H1 (cell line): ENCODE measurements at regions of chr11 and their contacts with region 1.

Region 1: GRCh38 chr11:68191661-68192579 is 21.2 kb downstream of the KMT5B start:
- DNase-seq: no peak
- H3K4me3 ChIP-seq: no peak overlapping the region
- H3K27ac ChIP-seq: no peak overlapping the region
- H3K4me1 ChIP-seq: peaks cover 0 to 6% (median 2%) of the 10 kb centered on the region in 4 experiments; a peak in 4 of 7 replicates
- H3K27me3 ChIP-seq: no peaks in the 10 kb centered on the region
- CTCF ChIP-seq: no peak
- EP300 ChIP-seq: no peak
- POLR2A ChIP-seq: no peak
- RAD21 ChIP-seq: no peak

Region 2: DNA sequence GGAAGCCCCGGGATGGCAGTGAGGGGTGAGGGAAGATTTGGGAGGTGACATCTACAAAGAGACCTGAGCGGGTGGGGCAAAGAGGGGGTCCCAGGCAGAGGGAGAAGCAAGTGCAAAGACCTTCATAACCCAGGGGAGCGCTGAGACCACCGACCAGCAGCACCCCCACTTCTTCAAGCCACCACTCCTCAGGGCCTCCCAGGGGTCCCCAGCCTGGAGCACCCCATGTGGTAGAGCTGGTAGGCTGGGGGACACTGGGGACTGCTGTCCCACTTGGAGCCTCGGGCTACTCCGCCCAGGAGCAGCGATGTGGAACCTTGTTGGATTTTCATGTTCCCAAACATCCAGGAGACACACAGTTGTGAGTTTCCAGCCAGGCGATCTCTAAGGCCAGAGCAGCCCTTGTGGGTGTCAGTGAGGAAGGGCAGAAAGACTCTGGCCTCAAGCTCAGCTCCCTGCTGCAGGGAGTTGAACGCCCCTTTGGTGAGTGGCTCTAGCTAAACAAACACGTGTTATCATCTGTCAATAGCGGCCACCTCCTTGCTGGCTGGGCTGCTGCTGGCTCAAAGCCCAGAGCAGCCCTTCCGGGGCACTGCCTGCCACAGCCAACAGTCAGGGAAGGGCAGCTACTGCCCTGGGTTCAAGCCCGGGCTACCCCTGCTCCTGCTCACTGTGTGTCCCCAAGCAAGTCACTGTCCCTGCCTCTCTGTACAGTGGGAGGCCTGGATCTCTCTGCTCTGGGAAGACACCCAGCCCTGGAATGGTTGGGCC is 45.0 kb before region 1 on chr11:
- CTCF ChIA-PET with region 1: no interaction called
- POLR2A ChIA-PET with region 1: no interaction called
- DNase-seq: no peak
- H3K4me3 ChIP-seq: no peak overlapping the region
- H3K27ac ChIP-seq: no peak overlapping the region
- H3K4me1 ChIP-seq: no peaks in the 10 kb centered on the region
- H3K27me3 ChIP-seq: no peaks in the 10 kb centered on the region
- CTCF ChIP-seq: no peak
- EP300 ChIP-seq: no peak
- POLR2A ChIP-seq: no peak
- RAD21 ChIP-seq: no peak

Region 3: DNA sequence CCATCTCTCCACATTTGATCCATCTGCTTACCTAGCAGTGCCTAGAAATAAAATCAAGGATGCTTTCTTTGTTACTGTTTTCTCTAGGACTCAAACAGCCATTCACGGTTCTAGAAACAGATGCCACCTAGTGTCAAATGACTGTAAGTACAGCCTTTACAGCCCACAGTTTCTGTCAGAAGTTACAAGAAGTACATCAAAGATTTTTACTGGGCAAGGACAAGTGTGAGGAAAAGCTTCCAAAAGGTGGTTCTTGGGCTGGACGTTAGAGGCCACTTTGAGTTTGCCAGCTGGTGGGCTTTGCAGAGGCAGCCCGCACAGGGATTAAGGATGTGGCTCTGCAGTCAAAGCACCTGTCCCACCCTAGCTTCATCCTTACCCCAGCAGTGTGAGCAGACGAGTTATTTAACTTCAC is 14.3 kb after region 1 on chr11:
- CTCF ChIA-PET with region 1: interaction called, 138 read pairs
- POLR2A ChIA-PET with region 1: interaction called, 5 read pairs
- DNase-seq: peak in 1 of 2 experiments; percentile 52
- H3K4me3 ChIP-seq: no peak overlapping the region
- H3K27ac ChIP-seq: no peak overlapping the region
- H3K4me1 ChIP-seq: peaks cover 2 to 11% (median 4%) of the 10 kb centered on the region in 4 experiments; a peak in 6 of 7 replicates
- H3K27me3 ChIP-seq: no peaks in the 10 kb centered on the region
- CTCF ChIP-seq: peak in 2 of 3 experiments; percentile 65 to 80; a peak in 3 of 4 replicates
- EP300 ChIP-seq: no peak
- POLR2A ChIP-seq: no peak
- RAD21 ChIP-seq: peak; percentile 60 to 73